Caco-2 (cell line): ENCODE measurements at regions of chr3 and their contacts with region 1.

Region 1: DNA sequence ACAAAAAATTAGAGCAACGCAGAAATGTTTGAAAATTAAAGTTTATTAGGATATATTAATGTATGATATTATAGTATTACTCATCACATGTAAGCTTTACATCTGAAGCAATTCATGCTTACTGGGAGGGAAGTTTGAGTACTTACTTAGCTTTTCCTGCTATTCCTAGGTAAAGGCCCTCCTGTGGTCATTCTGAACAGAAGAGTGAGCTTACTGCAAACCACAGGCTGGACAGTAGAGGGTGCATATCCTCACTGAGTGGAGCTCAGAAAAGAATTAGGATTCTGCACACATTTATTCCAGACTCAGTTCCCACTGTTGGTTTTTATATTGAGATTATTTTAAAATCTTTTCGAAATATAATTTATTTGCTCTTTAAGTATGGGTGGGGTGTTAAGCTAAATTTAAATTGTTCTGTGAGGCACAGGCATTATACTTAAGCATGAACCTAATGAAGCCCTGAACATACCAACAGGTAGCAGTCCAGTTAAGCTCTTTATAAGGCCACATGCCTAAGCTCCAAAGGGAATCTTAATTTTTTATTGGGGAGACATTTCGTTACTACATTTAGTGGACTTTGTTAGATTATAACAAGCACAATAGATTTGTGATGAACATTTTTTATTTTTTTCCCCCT is 10.2 kb downstream of the MRPS22 start:
- DNase-seq: peak; percentile 61 to 64
- H3K4me3 ChIP-seq: no peak overlapping the region
- H3K4me3 Mint-ChIP-seq: no peak overlapping the region
- H3K27ac Mint-ChIP-seq: no peak overlapping the region
- H3K4me1 ChIP-seq: no peaks in the 10 kb centered on the region
- H3K4me1 Mint-ChIP-seq: no peaks in the 10 kb centered on the region
- H3K27me3 ChIP-seq: no peaks in the 10 kb centered on the region
- H3K27me3 Mint-ChIP-seq: no peaks in the 10 kb centered on the region
- CTCF ChIP-seq: peak; percentile 81 to 97

Region 2: DNA sequence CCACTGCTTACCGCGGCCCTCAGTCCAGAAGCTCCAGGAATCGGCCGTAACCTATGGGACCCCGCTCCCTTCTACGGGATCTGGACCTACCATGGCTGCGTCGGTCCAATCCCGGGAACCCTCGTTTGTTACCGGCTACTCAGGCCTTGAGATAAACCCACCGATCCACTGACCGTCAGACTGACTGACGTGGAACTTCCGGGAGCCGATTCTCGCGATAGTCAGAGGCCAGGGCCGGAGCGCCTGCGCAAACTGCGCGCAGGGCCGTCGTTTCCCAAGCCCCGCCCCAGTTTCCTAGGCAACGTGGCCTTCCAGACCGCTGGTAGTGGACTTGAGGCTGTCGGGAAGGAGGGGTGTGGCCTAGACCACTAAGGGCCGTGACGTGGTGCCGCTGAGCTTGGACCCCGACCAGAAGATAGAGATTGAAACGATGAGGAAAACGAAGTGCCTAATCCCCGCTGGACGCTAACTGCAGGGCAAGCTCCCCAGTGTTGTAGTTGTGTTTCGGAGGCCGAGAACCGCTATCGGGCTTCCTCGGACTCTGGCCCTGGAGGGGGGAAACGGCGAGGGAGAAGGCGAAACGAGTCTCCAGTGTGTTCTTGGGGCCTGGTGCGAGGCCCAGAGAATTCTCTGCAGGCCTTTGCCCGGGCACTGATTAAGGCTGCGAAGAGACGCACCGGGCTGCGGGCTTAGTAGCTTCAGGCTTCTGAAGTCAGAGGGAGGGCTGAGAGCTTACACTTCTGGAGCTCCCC is 35.6 kb after region 1 on chr3 and contains the start of gene COPB2:
- CTCF ChIA-PET with region 1: interaction called, 14 read pairs
- POLR2A ChIA-PET with region 1: interaction called, 9 read pairs
- intact Hi-C with region 1: no loop called
- DNase-seq: peak; percentile 99
- H3K4me3 ChIP-seq: peak within 1 kb of the TSS; percentile 85
- H3K4me3 Mint-ChIP-seq: peak within 1 kb of the TSS; percentile 83
- H3K27ac Mint-ChIP-seq: peak within 1 kb of the TSS; percentile 97
- H3K4me1 ChIP-seq: 0 out of 2 replicates have a peak, but pooled peaks cover 3% of the 10 kb centered on the region
- H3K4me1 Mint-ChIP-seq: no peaks in the 10 kb centered on the region
- H3K27me3 ChIP-seq: no peaks in the 10 kb centered on the region
- H3K27me3 Mint-ChIP-seq: no peaks in the 10 kb centered on the region
- CTCF ChIP-seq: no peak
- total RNA-seq, gene COPB2: 130 and 132 TPM in 2 replicates

Region 3: DNA sequence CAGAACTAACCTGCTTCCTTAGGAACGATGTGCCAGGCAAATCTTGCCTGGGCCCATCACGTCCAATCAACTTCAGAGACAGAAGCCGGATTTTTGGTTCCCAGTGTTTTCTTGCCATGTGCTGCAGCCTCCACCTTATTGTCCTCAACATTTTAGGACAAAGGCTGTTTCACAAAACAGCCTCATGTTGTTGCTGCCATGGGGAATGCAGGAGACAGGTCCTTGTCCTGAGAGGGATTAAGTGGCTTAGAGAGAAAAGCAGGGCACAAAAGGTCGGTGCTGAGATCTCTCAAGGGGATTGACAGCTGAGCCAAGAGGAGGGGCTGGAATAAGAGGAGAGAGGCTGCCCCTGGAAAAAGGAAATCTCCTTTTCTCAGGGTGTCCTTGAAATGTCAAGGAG is 335.1 kb after region 1 on chr3:
- CTCF ChIA-PET with region 1: no interaction called
- POLR2A ChIA-PET with region 1: no interaction called
- intact Hi-C with region 1: no loop called
- DNase-seq: no peak
- H3K4me3 ChIP-seq: no peak overlapping the region
- H3K4me3 Mint-ChIP-seq: no peak overlapping the region
- H3K27ac Mint-ChIP-seq: no peak overlapping the region
- H3K4me1 ChIP-seq: peaks cover 17% of the 10 kb centered on the region; the same call in 1 of the 2 replicates
- H3K4me1 Mint-ChIP-seq: peaks cover 28% of the 10 kb centered on the region
- H3K27me3 ChIP-seq: no peaks in the 10 kb centered on the region
- H3K27me3 Mint-ChIP-seq: no peaks in the 10 kb centered on the region
- CTCF ChIP-seq: no peak